ENCODE measurements at regions of chr19 and their contacts with region 1.

Region 1: DNA sequence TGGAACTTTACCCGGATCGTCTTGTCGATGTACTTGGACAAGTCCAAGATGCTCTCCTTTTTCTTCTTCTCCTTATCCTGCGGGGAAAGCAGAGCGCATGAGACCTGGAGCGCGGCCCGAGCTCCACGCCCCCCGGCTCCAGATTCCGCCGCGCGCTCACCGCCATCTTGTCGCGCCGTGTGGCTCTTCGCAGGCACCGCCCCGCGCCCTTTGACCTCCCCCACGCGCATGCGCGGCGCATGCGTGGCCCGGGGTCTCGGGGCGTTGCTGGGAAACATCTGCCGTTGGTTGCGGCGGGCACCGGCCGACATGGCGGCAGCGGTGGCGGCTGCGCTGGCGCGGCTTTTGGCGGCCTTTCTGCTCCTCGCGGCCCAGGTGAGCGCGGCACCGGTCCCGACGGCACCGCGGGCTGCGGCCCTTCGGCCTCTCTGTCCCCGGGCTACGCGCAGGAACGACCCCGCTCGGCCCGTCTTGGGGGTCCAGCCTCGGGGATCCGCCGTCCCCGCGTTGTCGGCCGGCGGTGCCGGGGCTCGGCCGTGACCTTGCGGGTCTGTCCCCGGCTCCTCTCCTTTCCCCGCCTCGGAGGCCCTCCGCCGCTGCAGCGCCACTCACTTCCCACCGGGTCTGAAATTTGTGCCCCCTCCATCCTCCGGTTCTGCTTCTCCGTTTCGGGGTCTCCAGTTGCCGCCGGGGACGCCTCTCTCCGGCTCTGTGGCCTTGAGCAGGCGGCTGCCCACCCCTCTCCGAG is at the starts of genes LSM7 and SPPL2B:
- DNase-seq: peak; percentile 98
- H3K4me3 Mint-ChIP-seq: peak within 1 kb of the TSS; percentile 95
- H3K27ac Mint-ChIP-seq: peak within 1 kb of the TSS; percentile 97
- H3K4me1 Mint-ChIP-seq: peaks cover 51% of the 10 kb centered on the region
- H3K27me3 Mint-ChIP-seq: no peaks in the 10 kb centered on the region
- total RNA-seq, gene LSM7: 190 and 192 TPM in 2 replicates
- total RNA-seq, gene SPPL2B: 69.7 and 69.8 TPM in 2 replicates

Region 2: GRCh38 chr19:2289714-2290435 is 38.7 kb before region 1 on chr19:
- intact Hi-C with region 1: loop called (anchors 5 kb)
- DNase-seq: peak; percentile 92
- H3K4me3 Mint-ChIP-seq: peak overlapping the region; percentile 85
- H3K27ac Mint-ChIP-seq: peak overlapping the region; percentile 90
- H3K4me1 Mint-ChIP-seq: peaks cover 23% of the 10 kb centered on the region
- H3K27me3 Mint-ChIP-seq: no peaks in the 10 kb centered on the region

Measured in activated CD4-positive, alpha-beta T cell treated with anti-CD3 and anti-CD28 coated beads, Interleukin-2, amount 10 ng/mL, durations not matched to agents 24 days and 14 days (primary cell).